ENCODE measurements at regions of chr17 and their contacts with region 1.

Region 1: GRCh38 chr17:58352014-58352842 is at the start of gene SUPT4H1:
- DNase-seq: peak; percentile 80 to 88
- H3K4me3 ChIP-seq: peak within 1 kb of the TSS; percentile 90 to 96 (median 94)
- H3K27ac ChIP-seq: peak within 1 kb of the TSS; percentile 88
- H3K4me1 ChIP-seq: peaks cover 0 to 2% (median 0%) of the 10 kb centered on the region in 4 experiments; a peak in 1 of 7 replicates
- H3K27me3 ChIP-seq: no peaks in the 10 kb centered on the region
- CTCF ChIP-seq: peak in 1 of 3 experiments; percentile 10; a peak in 1 of 4 replicates
- EP300 ChIP-seq: peak in 1 of 2 experiments; percentile 97; a peak in 2 of 3 replicates
- POLR2A ChIP-seq: peak; percentile 68 to 86
- RAD21 ChIP-seq: peak in 1 of 2 experiments; percentile 22; a peak in 3 of 4 replicates
- total RNA-seq, gene SUPT4H1: 103 and 112 TPM in 2 replicates

Region 2: GRCh38 chr17:58200017-58200633 is 152.1 kb before region 1 on chr17:
- CTCF ChIA-PET with region 1: no interaction called
- POLR2A ChIA-PET with region 1: no interaction called
- DNase-seq: peak; percentile 27 to 89
- H3K4me3 ChIP-seq: no peak overlapping the region
- H3K27ac ChIP-seq: no peak overlapping the region
- H3K4me1 ChIP-seq: no peaks in the 10 kb centered on the region
- H3K27me3 ChIP-seq: no peaks in the 10 kb centered on the region
- CTCF ChIP-seq: peak; percentile 70 to 88 (median 86)
- EP300 ChIP-seq: no peak
- POLR2A ChIP-seq: no peak
- RAD21 ChIP-seq: peak; percentile 47 to 63

Region 3: GRCh38 chr17:58277107-58277801 is 75.0 kb before region 1 on chr17:
- CTCF ChIA-PET with region 1: interaction called, 14 read pairs
- POLR2A ChIA-PET with region 1: no interaction called
- DNase-seq: no peak
- H3K4me3 ChIP-seq: no peak overlapping the region
- H3K27ac ChIP-seq: no peak overlapping the region
- H3K4me1 ChIP-seq: peaks cover 0 to 3% (median 0%) of the 10 kb centered on the region in 4 experiments; a peak in 1 of 7 replicates
- H3K27me3 ChIP-seq: peaks cover 0 to 8% (median 0%) of the 10 kb centered on the region in 4 experiments; a peak in 3 of 7 replicates
- CTCF ChIP-seq: peak in 2 of 3 experiments; percentile 54 to 67; a peak in 3 of 4 replicates
- EP300 ChIP-seq: no peak
- POLR2A ChIP-seq: no peak
- RAD21 ChIP-seq: peak; percentile 65 to 73

Region 4: DNA sequence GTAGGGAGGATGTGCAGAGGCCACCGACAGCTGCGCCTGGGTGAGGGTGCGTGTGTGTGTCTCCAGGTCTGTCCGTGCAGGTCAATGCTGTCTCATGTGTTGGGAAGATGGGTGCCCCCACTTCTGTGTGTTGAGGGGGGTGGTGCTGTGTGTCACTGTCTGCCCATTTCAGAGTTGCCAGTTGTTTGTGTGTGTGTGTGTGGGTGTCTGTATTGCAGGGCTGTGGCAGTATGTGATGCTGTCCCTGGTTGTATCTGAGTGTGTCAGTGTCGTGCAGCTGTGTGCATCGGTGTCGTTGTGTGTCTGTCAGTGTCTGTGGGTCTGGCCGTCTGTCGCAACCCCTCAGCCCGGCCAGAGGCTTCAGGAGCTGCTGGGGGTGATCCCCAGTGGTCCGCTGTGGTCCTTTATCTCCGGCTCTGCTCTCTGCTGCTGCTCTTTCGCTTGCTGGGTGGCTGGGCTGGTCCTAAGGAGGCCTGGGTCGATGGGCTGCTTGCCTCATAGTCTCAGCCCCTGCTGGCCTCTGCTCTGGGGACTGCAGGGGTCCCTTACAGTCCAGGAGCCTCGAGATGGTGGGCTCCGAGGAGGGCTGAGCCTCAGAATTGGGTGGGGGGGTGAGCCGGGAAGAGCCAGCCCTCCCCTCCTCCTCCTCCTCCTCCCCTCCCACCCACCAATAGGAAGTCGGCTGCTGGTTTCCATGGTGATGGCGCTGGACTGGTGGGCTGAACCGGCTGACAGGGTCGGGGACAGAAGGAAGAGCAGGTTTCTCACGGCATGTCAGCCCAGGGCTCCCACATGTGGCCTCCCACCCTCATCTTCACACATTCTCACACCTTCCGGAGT is 23.8 kb before region 1 on chr17 and contains the start of gene TSPOAP1:
- CTCF ChIA-PET with region 1: interaction called, 384 read pairs
- POLR2A ChIA-PET with region 1: interaction called, 46 read pairs
- DNase-seq: peak in 1 of 2 experiments; percentile 84
- H3K4me3 ChIP-seq: peak within 1 kb of the TSS in 3 of 4 experiments; percentile 7 to 40 (median 21); a peak in 4 of 8 replicates
- H3K27ac ChIP-seq: no peak within 1 kb of the TSS
- H3K4me1 ChIP-seq: peaks cover 0 to 42% (median 29%) of the 10 kb centered on the region in 4 experiments; a peak in 6 of 7 replicates
- H3K27me3 ChIP-seq: peaks cover 0 to 16% (median 10%) of the 10 kb centered on the region in 4 experiments; a peak in 5 of 7 replicates
- CTCF ChIP-seq: no peak
- EP300 ChIP-seq: no peak
- POLR2A ChIP-seq: no peak
- RAD21 ChIP-seq: no peak
- total RNA-seq, gene TSPOAP1: 9.2 and 9.8 TPM in 2 replicates

Region 5: DNA sequence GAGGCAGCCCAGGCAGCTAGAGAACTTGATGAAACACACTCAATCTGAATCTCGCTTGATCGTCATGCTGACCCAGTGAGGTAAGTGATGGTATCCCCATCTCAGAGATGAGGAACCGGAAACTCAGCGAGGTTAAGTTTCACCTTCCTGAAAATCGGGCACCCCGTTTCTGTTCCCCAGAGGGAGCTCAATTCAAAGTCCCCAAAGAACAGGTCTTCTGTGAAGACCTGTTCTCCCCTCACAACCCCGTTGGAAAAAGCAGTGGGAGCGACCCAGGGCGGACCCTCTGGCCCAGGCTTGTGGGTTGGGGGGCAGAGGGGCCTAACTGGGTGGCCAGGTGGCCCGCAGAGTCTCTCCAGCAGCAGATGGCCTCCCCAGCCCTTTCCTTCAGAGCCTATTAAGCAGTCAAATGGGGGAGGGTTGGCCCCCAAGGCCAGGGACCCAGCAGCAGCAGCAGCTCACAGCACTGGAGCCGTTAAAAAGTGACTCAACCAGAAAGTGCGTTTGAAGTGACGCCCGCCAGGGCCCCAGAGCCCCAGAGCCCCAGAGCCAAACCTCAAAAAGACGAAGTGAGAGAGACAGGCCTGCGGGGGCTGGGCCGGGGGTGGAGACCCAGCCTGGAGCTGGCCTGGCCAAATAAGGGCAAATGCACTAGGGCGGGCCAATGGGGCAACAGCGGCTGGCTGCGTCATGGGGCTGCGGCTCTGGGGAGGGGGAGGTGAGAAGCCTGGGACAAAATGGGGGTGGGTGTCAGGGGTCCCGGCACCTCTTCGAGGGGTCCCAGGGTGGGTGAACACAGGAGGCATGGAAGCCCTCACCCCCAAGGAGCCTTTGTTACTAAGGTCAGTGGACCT is 14.4 kb before region 1 on chr17:
- CTCF ChIA-PET with region 1: interaction called, 21 read pairs
- POLR2A ChIA-PET with region 1: interaction called, 149 read pairs
- DNase-seq: peak; percentile 44 to 78
- H3K4me3 ChIP-seq: peak overlapping the region in 1 of 4 experiments; percentile 36; a peak in 1 of 8 replicates
- H3K27ac ChIP-seq: peak overlapping the region; percentile 70
- H3K4me1 ChIP-seq: peaks cover 4 to 26% (median 21%) of the 10 kb centered on the region in 4 experiments
- H3K27me3 ChIP-seq: peaks cover 0 to 2% (median 0%) of the 10 kb centered on the region in 4 experiments; a peak in 3 of 7 replicates
- CTCF ChIP-seq: no peak; a peak in 1 of 4 replicates
- EP300 ChIP-seq: peak in 1 of 2 experiments; percentile 55; a peak in 1 of 3 replicates
- POLR2A ChIP-seq: peak in 1 of 2 experiments; percentile 69; a peak in 1 of 3 replicates
- RAD21 ChIP-seq: no peak

Region 6: DNA sequence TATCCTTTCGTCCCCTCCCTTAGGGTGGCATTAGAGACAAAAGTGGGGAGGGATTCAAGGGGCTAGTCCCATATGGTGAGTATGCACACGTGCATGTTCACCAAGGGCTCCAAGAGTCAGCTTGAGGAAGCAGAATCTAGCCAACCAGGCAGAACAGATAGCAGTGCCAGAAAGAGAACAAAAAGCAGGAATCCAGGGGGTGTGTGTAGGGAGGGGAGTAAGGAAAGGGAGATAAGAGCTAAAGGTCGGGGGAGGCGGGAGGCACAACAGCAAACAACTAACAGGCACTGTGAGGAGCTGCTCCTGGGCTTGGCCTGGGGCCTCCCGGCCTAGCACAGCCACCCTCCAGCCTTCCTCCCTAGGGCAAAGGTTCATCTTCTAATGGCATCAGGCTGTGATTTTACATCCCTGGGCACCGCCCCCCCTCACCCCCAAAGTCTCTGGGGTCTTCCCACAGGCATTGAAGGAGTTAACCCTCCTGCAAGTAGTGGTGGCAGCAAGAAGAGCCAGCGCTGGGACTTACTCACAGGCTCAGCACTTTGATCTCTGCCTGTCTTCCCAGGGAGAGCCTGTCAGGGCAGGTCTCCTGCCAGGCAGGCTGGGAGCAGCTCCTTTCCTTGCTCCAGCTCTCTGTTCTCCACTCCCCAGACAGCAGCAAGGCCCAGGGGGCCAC is 12.2 kb after region 1 on chr17:
- CTCF ChIA-PET with region 1: interaction called, 32 read pairs
- POLR2A ChIA-PET with region 1: interaction called, 30 read pairs
- DNase-seq: no peak
- H3K4me3 ChIP-seq: no peak overlapping the region
- H3K27ac ChIP-seq: no peak overlapping the region
- H3K4me1 ChIP-seq: peaks cover 0 to 2% (median 0%) of the 10 kb centered on the region in 4 experiments; a peak in 1 of 7 replicates
- H3K27me3 ChIP-seq: no peaks in the 10 kb centered on the region
- CTCF ChIP-seq: no peak
- EP300 ChIP-seq: no peak
- POLR2A ChIP-seq: no peak
- RAD21 ChIP-seq: no peak

Region 7: DNA sequence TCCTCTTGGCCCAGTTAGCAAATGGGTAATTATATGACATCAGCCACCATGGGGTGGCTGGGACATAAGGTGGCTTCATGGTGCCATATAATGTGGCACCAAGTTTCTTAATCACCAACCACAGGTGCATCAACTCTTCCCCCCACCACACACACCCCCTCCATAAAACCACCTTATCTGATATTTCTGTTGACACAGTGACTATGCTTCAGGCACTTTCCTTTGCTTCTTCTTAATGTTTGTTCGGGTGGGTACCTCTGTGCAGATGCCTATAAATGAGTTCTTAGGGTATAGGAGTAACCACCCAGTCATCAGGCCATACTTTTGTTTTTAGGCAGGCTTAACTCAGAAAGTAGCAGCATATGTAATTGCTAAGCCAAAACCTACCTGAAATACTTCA is 35.6 kb after region 1 on chr17:
- CTCF ChIA-PET with region 1: interaction called, 4 read pairs
- POLR2A ChIA-PET with region 1: interaction called, 10 read pairs
- DNase-seq: no peak
- H3K4me3 ChIP-seq: no peak overlapping the region
- H3K27ac ChIP-seq: no peak overlapping the region
- H3K4me1 ChIP-seq: peaks cover 3 to 18% (median 6%) of the 10 kb centered on the region in 4 experiments; a peak in 5 of 7 replicates
- H3K27me3 ChIP-seq: no peaks in the 10 kb centered on the region; a peak in 1 of 7 replicates
- CTCF ChIP-seq: no peak
- EP300 ChIP-seq: no peak
- POLR2A ChIP-seq: no peak
- RAD21 ChIP-seq: no peak

Region 8: GRCh38 chr17:58447039-58447975 is 95.1 kb after region 1 on chr17:
- CTCF ChIA-PET with region 1: interaction called, 12 read pairs
- POLR2A ChIA-PET with region 1: interaction called, 6 read pairs
- DNase-seq: peak; percentile 70 to 83
- H3K4me3 ChIP-seq: no peak overlapping the region
- H3K27ac ChIP-seq: no peak overlapping the region
- H3K4me1 ChIP-seq: peaks cover 3 to 9% (median 4%) of the 10 kb centered on the region in 4 experiments; a peak in 6 of 7 replicates
- H3K27me3 ChIP-seq: no peaks in the 10 kb centered on the region
- CTCF ChIP-seq: peak; percentile 81 to 96 (median 96)
- EP300 ChIP-seq: 0 out of 3 replicates have a peak, but pooled peaks of 1 of the 2 experiments have one; percentile 5
- POLR2A ChIP-seq: no peak
- RAD21 ChIP-seq: peak; percentile 99

Measured in H1 (cell line).